CD8-positive, alpha-beta T cell (primary cell): ENCODE measurements at regions of chr17 and their contacts with region 1.

Region 1: GRCh38 chr17:55872374-55872773 is 121.5 kb downstream of the PCTP start:
- DNase-seq: no peak
- ATAC-seq: no peak
- H3K4me3 ChIP-seq: no peak overlapping the region
- H3K4me3 Mint-ChIP-seq: no peak overlapping the region
- H3K27ac ChIP-seq: no peak overlapping the region
- H3K27ac Mint-ChIP-seq: no peak overlapping the region
- H3K4me1 ChIP-seq: no peaks in the 10 kb centered on the region
- H3K4me1 Mint-ChIP-seq: no peaks in the 10 kb centered on the region
- H3K27me3 ChIP-seq: no peaks in the 10 kb centered on the region
- H3K27me3 Mint-ChIP-seq: no peaks in the 10 kb centered on the region
- CTCF ChIP-seq: no peak

Region 2: GRCh38 chr17:55814377-55814776 is 58.0 kb before region 1 on chr17:
- CTCF ChIA-PET with region 1: no interaction called
- POLR2A ChIA-PET with region 1: no interaction called
- intact Hi-C with region 1: loop called in 1 of 2 experiments (anchors 10 kb)
- DNase-seq: no peak
- ATAC-seq: no peak
- H3K4me3 ChIP-seq: no peak overlapping the region
- H3K4me3 Mint-ChIP-seq: no peak overlapping the region
- H3K27ac ChIP-seq: no peak overlapping the region
- H3K27ac Mint-ChIP-seq: no peak overlapping the region
- H3K4me1 ChIP-seq: no peaks in the 10 kb centered on the region
- H3K4me1 Mint-ChIP-seq: peaks cover 4% of the 10 kb centered on the region
- H3K27me3 ChIP-seq: no peaks in the 10 kb centered on the region
- H3K27me3 Mint-ChIP-seq: peaks cover 9% of the 10 kb centered on the region
- CTCF ChIP-seq: no peak

Region 3: DNA sequence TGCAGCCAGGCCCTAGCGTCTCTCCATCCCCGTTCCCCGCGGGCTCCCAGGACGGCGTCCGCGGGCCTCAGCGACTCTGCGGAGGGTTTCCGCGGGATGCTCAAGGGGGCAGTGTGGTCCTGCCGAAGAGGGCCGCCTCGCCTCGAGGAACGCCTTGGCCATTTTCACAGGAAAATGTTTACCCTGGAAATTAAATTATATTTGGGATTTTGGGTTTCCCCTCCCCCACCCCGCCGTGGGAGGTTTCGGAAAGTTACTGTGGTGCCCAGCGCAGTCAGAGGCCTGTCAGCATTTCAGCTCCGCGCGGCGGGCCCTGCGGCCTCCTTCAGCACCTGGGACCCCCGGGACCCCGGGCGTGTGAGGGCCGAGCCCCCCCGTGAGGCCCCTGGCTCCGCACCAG is 27.0 kb before region 1 on chr17:
- CTCF ChIA-PET with region 1: no interaction called
- POLR2A ChIA-PET with region 1: no interaction called
- intact Hi-C with region 1: no loop called
- DNase-seq: peak in 6 of 9 experiments; percentile 1 to 51 (median 18)
- ATAC-seq: no peak
- H3K4me3 ChIP-seq: no peak overlapping the region
- H3K4me3 Mint-ChIP-seq: no peak overlapping the region
- H3K27ac ChIP-seq: no peak overlapping the region
- H3K27ac Mint-ChIP-seq: no peak overlapping the region
- H3K4me1 ChIP-seq: no peaks in the 10 kb centered on the region
- H3K4me1 Mint-ChIP-seq: no peaks in the 10 kb centered on the region
- H3K27me3 ChIP-seq: peaks cover 6 to 7% of the 10 kb centered on the region in 2 experiments
- H3K27me3 Mint-ChIP-seq: peaks cover 19% of the 10 kb centered on the region
- CTCF ChIP-seq: no peak